ENCODE measurements at regions of chr9 and their contacts with region 1.

Region 1: GRCh38 chr9:35690431-35691333 is 957 bp upstream of the TPM2 start:
- DNase-seq: peak; percentile 43
- H3K4me3 Mint-ChIP-seq: peak overlapping the region; percentile 78
- H3K27ac Mint-ChIP-seq: no peak overlapping the region
- H3K4me1 Mint-ChIP-seq: peaks cover 18% of the 10 kb centered on the region
- H3K27me3 Mint-ChIP-seq: no peaks in the 10 kb centered on the region

Region 2: DNA sequence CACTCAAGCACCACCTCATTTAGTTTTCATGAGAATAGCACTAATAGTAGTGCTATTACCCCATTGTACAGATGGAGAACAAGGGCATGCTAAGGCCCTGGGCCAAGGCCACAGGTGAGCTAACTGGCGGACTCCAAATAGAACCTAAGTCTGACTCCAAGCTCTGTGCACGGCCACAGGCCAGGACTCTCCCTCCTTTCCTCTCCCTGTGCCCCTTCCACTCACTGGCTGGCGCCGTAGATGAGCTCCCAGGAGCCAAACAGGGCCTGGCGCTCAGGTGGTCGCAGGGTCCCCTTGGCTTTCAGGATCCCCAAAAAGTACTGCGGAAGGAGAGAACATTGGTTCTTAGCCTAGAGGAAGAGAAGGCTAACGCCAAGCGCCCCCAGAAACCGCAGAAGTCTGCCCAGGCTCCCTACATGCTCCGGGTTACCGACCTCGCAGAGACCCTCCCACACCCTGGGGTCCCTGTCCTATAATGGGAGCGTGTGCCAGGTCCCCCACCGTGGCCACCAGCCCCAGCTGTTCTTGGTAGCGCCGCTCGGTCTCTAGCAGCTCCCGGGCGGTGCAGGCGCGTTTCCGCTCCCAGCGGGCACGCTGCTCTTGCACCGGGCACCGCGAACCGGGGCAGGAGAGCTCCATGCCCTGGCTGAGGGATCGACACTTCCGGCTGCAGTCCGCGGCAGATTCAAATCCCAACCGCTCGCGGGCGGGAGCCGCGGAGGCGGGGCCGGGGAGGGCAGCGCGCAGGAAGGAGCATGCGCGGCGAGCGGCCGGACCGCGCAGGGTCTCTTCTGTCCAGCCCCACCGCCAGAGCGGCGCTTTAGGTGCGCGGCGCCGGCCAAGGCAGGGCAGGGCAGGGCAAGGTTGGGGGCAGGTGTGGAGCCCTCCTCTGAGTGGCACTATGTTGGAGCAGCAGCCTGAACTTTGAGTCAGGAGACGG is 25.9 kb before region 1 on chr9 and contains the start of gene ARHGEF39:
- CTCF ChIA-PET with region 1: interaction called, 86 read pairs
- intact Hi-C with region 1: loop called (anchors 2 kb)
- DNase-seq: peak; percentile 87
- H3K4me3 Mint-ChIP-seq: peak within 1 kb of the TSS; percentile 82
- H3K27ac Mint-ChIP-seq: peak within 1 kb of the TSS; percentile 67
- H3K4me1 Mint-ChIP-seq: peaks cover 49% of the 10 kb centered on the region
- H3K27me3 Mint-ChIP-seq: no peaks in the 10 kb centered on the region
- total RNA-seq, gene ARHGEF39: 28.9 to 30.4 TPM

Measured in activated naive CD4-positive, alpha-beta T cell treated with anti-CD3 and anti-CD28 coated beads for 36 hours (primary cell).